Mucosa of descending colon (tissue), 3 donors: ENCODE measurements at regions of chr18 and their contacts with region 1.

Region 1: GRCh38 chr18:23619388-23619881 is 33.1 kb upstream of the NPC1 start:
- DNase-seq: peak in 2 of 3 donors; percentile 14 to 51
- ATAC-seq: peak; percentile 62
- H3K4me3 ChIP-seq: no peak overlapping the region
- H3K4me1 ChIP-seq: no peaks in the 10 kb centered on the region
- CTCF ChIP-seq: no peak

Region 2: GRCh38 chr18:23703057-23703986 is 83.9 kb after region 1 on chr18:
- intact Hi-C with region 1: loop called in 1 of 2 experiments (anchors 10 kb)
- DNase-seq: peak in 1 of 3 donors; percentile 57
- ATAC-seq: peak; percentile 87
- H3K4me3 ChIP-seq: no peak overlapping the region
- H3K4me1 ChIP-seq: no peaks in the 10 kb centered on the region
- CTCF ChIP-seq: peak; percentile 26